ENCODE measurements at regions of chr17 and their contacts with region 1.

Region 1: DNA sequence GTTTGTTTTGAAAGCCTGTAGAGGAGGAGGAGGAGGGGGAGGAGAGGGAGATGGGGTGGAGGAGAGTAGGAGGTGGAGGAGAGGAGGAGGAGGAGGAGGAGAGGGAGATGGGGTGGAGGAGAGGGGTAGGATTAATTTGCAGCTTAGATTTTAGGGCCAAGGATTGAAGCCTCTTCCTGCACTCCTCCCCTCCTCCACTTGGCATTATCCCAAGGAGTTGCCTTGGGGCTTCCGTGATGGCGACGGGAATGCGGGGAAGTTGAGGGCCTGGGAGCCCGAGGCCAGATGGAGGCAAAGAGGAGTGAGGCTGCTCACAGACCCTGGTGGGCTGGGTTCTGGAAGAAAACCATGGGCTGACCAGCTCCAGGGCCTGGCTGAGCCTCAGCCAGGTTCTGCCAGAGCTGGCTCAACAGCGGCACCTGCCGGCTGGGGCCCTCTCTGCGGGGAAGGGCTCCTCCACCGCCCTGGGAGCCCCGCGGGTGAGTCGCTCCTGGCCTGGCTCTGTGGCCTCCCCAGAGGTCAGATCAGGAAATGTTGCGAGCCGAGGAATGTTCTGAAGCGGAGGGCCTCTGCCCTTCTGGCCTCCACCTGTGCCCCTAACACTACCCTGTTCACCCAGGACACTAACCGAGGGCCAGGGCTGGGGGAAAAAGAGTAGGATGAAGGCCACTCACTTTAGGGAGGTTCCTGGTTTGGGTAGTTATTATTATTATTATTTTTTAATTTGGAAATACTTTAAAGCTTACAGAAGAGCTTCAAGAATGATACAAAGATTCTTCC is 23.9 kb upstream of the FMNL1 start:
- DNase-seq: peak; percentile 95
- H3K4me3 ChIP-seq: no peak overlapping the region
- H3K27ac ChIP-seq: peak overlapping the region; percentile 58 to 77 (median 70)
- H3K4me1 ChIP-seq: peaks cover 0 to 15% (median 11%) of the 10 kb centered on the region in 4 donors
- H3K27me3 ChIP-seq: no peaks in the 10 kb centered on the region
- CTCF ChIP-seq: peak; percentile 99
- EP300 ChIP-seq: no peak
- POLR2A ChIP-seq: no peak

Region 2: DNA sequence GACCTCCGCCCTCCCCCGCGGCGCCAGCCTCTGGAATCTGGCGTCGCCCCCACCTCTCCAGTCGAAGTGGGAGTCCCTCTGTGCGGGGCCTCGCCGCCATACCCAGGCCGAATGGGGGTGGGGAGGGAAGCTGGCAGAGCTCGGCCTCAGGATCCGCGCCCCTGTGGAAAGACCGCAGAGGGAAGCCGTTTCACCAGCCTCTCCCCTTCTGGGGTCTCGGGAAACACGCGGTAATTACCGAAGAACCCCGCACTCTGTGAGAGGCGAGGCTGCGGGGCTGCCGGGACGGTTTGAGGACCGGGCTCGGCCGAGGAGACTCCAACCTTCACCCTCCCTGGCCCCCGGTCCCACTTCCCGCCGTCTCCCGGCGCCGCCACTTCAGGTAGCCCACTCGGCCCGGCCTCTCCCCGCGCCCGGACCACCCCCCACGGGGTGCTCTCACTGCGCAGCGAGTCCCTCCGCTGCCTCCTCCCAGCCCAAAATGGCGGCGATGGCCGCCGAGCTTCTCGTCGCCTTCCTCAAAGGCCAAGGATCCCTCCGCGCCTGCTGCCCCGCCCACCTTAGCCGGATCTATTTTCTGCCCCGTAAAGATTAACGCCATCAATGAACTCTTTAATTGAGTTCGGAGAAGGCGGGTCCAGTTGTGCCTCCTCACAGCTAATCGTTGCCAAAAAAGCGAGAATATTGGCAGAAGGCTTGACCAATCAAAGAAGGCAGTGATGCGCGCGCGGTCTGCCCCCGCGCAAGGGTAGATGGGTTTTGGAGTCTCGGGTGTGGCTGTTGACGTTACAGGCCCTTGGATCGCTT is 36.5 kb before region 1 on chr17:
- intact Hi-C with region 1: loop called (anchors 5 kb)
- DNase-seq: peak; percentile 99
- H3K4me3 ChIP-seq: peak overlapping the region; percentile 83 to 91 (median 88)
- H3K27ac ChIP-seq: peak overlapping the region; percentile 98 to 99 (median 99)
- H3K4me1 ChIP-seq: peaks cover 0 to 51% (median 45%) of the 10 kb centered on the region in 4 donors
- H3K27me3 ChIP-seq: no peaks in the 10 kb centered on the region
- CTCF ChIP-seq: no peak
- EP300 ChIP-seq: peak in 2 of 4 donors; percentile 2 to 56
- POLR2A ChIP-seq: peak; percentile 97

Region 3: GRCh38 chr17:45660474-45660873 is 462.7 kb after region 1 on chr17:
- intact Hi-C with region 1: no loop called
- DNase-seq: no peak
- H3K4me3 ChIP-seq: no peak overlapping the region
- H3K27ac ChIP-seq: no peak overlapping the region
- H3K4me1 ChIP-seq: no peaks in the 10 kb centered on the region
- H3K27me3 ChIP-seq: peaks cover 0 to 5% (median 0%) of the 10 kb centered on the region in 3 donors
- CTCF ChIP-seq: no peak
- EP300 ChIP-seq: no peak
- POLR2A ChIP-seq: no peak